CD14-positive monocyte (primary cell): ENCODE measurements at regions of chr17 and their contacts with region 1.

Region 1: DNA sequence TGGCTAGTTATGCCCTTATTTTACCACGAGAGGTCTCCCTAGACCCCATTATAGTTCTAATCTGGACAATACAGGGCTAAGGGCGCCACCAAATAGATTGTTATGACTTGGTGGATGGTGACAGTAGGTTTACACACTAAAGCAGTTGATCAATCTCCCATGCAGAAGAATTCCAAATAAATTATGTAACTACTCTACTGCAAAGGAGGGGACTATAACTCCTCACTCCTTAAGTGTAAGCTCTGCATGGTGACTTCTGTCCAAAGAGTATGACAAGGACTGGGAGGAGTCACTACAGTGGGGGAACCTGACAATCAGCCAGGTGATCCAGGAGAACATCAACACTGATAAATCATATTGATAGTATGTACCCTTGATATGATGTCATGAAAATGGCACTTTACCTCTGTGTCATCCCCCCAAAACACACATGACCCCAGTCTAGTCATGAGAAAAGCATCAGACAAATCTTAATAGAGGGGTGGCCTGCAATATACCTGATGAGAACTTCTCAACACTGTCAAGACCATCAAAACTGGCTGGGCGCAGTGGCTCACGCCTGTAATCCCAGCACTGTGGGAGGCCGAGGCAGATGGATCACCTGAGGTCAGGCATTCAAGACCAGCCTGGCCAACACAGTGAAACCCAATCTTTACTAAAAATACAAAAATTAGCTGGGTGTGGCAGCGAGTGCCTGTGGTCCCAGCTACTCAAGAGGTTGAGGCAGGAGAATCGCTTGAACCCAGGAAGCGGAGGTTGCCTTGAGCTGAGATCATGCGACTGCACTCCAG is 20.1 kb upstream of the YPEL2 start:
- DNase-seq: peak; percentile 48 to 75 (median 61)
- H3K4me3 ChIP-seq: no peak overlapping the region
- H3K4me3 Mint-ChIP-seq: no peak overlapping the region
- H3K27ac ChIP-seq: no peak overlapping the region
- H3K27ac Mint-ChIP-seq: peak overlapping the region in 1 of 7 donors; percentile 63
- H3K4me1 ChIP-seq: no peaks in the 10 kb centered on the region
- H3K4me1 Mint-ChIP-seq: peaks cover 8% of the 10 kb centered on the region
- H3K27me3 ChIP-seq: no peaks in the 10 kb centered on the region
- H3K27me3 Mint-ChIP-seq: peaks cover 0 to 2% (median 0%) of the 10 kb centered on the region in 3 donors
- CTCF ChIP-seq: peak; percentile 92

Region 2: DNA sequence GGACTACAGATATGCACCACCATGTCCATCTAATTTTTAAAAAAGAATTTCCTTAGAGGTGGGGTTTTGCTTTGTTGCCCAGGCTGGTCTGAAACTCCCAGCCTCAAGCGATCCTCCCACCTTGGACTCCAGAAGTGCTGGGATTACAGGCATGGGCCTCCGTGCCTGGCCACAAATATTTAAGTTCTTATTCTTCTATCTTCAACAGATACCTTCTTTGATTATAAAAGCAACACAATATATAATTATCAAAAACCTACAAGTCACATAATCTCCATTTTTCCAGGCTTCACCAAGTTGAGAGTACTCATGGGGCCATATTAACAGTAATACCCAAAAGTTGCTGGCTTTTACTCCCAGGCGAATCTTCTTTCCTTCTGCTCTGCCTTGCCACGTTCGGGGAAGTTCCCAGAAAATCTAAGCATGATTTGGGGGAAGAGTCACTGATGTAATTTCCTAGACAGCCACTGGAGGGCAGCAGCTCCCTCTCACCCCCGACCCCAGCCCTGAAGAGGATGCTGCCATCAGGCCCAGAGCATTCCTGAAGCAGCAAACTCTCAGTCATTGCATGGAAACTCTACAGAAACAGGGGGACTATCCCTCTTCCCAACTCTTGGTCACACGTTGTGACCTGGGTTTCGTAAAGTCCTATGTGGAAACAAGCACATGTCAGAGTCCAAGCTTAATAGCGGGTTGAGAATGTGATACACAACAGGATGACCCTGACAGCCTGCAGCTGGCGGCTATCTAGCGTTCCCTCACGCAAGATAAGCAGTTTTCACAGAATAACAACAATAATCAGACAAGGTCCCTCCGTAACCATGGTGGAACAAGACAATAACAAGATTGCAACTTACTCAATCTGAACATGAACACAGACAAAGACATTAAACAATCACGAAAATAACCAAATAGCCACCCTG is 210.1 kb after region 1 on chr17:
- intact Hi-C with region 1: loop called in 1 of 2 experiments (anchors 5 kb)
- DNase-seq: peak; percentile 48 to 83 (median 65)
- H3K4me3 ChIP-seq: no peak overlapping the region
- H3K4me3 Mint-ChIP-seq: peak overlapping the region; percentile 48 to 73
- H3K27ac ChIP-seq: no peak overlapping the region
- H3K27ac Mint-ChIP-seq: peak overlapping the region in 2 of 7 donors; percentile 70 to 77
- H3K4me1 ChIP-seq: peaks cover 19 to 31% of the 10 kb centered on the region in 2 donors
- H3K4me1 Mint-ChIP-seq: peaks cover 24% of the 10 kb centered on the region
- H3K27me3 ChIP-seq: no peaks in the 10 kb centered on the region
- H3K27me3 Mint-ChIP-seq: peaks cover 0 to 1% (median 0%) of the 10 kb centered on the region in 3 donors
- CTCF ChIP-seq: peak; percentile 95